ENCODE measurements at regions of chr1 and their contacts with region 1.

Region 1: DNA sequence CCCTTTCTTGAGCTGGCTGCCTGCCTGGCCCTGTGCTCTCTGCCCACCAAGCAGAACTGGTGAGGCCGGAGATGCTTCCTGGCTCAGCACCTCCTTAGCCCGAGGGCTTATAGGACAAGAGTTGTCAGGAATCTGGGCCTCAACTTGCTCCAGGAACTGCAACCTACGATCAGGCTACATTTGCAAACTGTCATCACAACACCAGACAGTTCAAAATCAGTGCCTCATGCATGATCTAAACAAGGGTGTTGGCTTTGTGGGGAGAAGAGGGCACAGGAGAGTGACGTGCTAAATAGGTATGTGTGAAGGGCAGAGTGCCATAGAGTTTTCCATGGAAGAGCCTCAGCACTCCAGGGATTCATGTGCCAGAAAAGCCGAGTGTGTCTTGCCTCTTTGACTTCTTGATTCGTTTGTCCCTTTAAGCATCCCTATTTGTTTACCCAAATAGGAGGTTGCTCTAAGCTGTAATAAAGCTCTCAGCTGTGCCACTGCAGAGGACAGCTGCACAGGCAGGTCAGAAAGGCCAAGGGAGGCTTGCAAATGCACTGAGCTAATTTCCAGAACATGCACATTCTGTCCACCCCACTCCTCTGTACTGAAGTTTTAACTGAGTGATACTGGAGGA is 30.2 kb upstream of the NEK2 start:
- DNase-seq: no peak
- ATAC-seq: no peak
- H3K4me3 ChIP-seq: no peak overlapping the region
- H3K27ac ChIP-seq: no peak overlapping the region
- H3K4me1 ChIP-seq: peaks cover 8% of the 10 kb centered on the region
- H3K27me3 ChIP-seq: no peaks in the 10 kb centered on the region
- CTCF ChIP-seq: no peak
- POLR2A ChIP-seq: no peak

Region 2: DNA sequence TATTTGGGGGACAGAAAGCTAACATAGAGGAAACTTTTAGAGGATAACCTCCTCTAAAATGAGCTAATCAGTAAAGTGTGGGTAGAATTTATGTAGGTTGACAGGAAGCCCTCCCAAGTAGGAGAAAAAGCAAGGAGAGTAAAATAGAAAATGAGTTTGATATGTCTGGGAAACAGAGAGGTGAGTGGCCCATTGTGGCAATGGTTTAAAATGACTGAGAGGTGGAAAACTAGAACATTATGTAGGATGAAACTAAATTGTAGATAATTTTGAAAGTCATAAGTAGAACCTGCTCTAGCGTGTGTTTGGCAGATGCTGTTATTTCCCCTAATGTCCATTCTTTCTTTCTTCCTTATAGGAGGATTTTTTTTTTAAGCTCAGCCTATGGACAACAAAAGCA is 133.5 kb after region 1 on chr1:
- intact Hi-C with region 1: loop called (anchors 5 kb)
- DNase-seq: no peak
- ATAC-seq: no peak
- H3K4me3 ChIP-seq: no peak overlapping the region
- H3K27ac ChIP-seq: no peak overlapping the region
- H3K4me1 ChIP-seq: no peaks in the 10 kb centered on the region
- H3K27me3 ChIP-seq: no peaks in the 10 kb centered on the region
- CTCF ChIP-seq: no peak
- POLR2A ChIP-seq: no peak

Region 3: GRCh38 chr1:211944733-211945500 is 239.3 kb after region 1 on chr1:
- intact Hi-C with region 1: loop called (anchors 10 kb)
- DNase-seq: peak; percentile 68 to 86 (median 80)
- ATAC-seq: peak; percentile 92
- H3K4me3 ChIP-seq: no peak overlapping the region
- H3K27ac ChIP-seq: peak overlapping the region in 3 of 4 donors; percentile 9 to 67 (median 37)
- H3K4me1 ChIP-seq: peaks cover 32% of the 10 kb centered on the region
- H3K27me3 ChIP-seq: no peaks in the 10 kb centered on the region
- CTCF ChIP-seq: peak; percentile 27 to 86 (median 68)
- POLR2A ChIP-seq: no peak

Region 4: GRCh38 chr1:212271823-212272485 is 566.4 kb after region 1 on chr1:
- intact Hi-C with region 1: no loop called
- DNase-seq: no peak
- ATAC-seq: peak; percentile 18
- H3K4me3 ChIP-seq: no peak overlapping the region
- H3K27ac ChIP-seq: peak overlapping the region in 3 of 4 donors; percentile 33 to 41 (median 37)
- H3K4me1 ChIP-seq: peaks cover 23% of the 10 kb centered on the region
- H3K27me3 ChIP-seq: no peaks in the 10 kb centered on the region
- CTCF ChIP-seq: no peak
- POLR2A ChIP-seq: no peak